Brain microvascular endothelial cell (primary cell): ENCODE measurements at regions of chr15 and their contacts with region 1.

Region 1: DNA sequence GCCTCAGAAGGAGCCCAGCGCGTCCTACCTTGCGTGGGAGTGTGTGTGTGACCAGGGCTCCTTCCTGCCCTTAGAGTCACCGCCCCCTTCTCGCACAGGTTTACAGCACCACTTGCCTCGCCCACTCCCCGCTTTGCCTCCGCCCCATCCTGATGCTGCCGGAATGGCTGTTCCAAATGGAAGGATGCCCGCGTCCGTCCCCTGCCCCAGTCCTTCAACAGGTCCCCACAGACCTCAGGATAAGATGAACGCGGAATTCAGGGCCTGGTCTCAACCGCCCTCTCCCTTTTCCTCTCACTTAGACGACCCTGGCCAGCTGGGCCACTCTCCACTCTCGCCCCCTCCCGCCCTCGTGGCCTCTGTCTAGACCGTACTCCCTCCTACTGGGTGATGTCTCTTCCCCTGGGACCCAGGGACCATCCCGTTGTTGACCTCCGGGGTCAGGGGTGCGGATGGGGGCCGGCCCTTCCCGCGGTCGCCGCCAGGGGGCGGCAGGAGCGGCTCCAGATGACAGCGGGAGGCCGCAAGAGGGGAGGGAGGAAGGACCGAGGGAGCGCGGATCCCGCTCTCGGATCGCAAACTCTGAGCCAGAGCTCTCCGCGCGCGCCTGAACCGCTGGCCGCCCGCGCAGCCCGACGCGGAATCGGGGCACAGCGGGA is at the start of gene THSD4:
- DNase-seq: peak; percentile 62
- H3K4me3 ChIP-seq: peak within 1 kb of the TSS; percentile 74
- H3K27ac ChIP-seq: peak within 1 kb of the TSS; percentile 78
- H3K27me3 ChIP-seq: no peaks in the 10 kb centered on the region
- CTCF ChIP-seq: peak; percentile 97

Region 2: DNA sequence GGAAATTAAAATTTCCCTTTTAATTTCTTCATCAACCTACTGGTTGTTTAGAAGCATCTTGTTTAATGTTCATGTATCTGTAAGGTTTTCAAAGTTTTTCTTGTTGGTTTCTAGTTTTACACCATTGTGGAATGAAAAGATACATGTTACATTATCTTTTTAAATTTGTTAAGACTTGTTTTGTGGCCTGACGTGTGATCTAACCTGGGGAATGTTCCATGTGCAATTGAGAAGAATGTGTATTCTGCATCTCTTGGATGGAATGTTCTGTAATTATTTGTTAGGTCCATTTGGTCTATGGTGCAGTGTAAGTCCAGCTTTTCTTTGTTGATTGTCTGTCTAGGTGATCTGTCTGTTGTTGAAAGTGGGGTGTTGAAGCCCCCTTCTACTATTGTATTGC is 46.0 kb after region 1 on chr15:
- in situ Hi-C with region 1: no loop called
- DNase-seq: no peak
- H3K4me3 ChIP-seq: no peak overlapping the region
- H3K27ac ChIP-seq: no peak overlapping the region
- H3K27me3 ChIP-seq: no peaks in the 10 kb centered on the region
- CTCF ChIP-seq: no peak

Region 3: GRCh38 chr15:71448688-71449114 is 333.7 kb after region 1 on chr15:
- in situ Hi-C with region 1: loop called (anchors 25 kb)
- DNase-seq: peak; percentile 70
- H3K4me3 ChIP-seq: no peak overlapping the region
- H3K27ac ChIP-seq: no peak overlapping the region
- H3K27me3 ChIP-seq: no peaks in the 10 kb centered on the region
- CTCF ChIP-seq: peak; percentile 82

Region 4: DNA sequence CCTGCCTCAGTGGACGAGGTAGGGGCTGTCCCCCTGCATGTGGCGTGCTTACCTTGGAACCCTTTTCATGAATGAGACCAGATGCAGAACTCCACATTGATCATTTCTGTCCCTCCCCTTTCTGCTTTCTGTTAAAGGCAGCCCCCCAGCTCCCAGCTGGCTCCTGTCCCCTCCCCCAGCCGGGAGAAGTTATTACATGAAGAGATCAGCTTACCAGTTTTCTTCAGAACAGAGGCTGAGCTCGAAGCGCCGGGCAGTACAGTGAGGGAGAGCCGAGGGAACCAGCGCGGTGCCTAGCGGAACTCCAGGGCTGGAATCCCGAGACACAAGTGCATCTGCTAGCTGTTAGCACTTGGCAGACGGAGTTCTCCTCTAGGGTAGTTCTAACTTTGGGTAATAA is 432.0 kb after region 1 on chr15:
- in situ Hi-C with region 1: no loop called
- DNase-seq: no peak
- H3K4me3 ChIP-seq: no peak overlapping the region
- H3K27ac ChIP-seq: no peak overlapping the region
- H3K27me3 ChIP-seq: no peaks in the 10 kb centered on the region
- CTCF ChIP-seq: no peak